Astrocyte of the cerebellum (primary cell): ENCODE measurements at regions of chr3 and their contacts with region 1.

Region 1: GRCh38 chr3:143674100-143674968 is 173.9 kb downstream of the SLC9A9 start:
- DNase-seq: peak; percentile 65
- H3K4me3 ChIP-seq: no peak overlapping the region
- CTCF ChIP-seq: peak; percentile 96

Region 2: GRCh38 chr3:143135150-143135549 is 539.2 kb before region 1 on chr3:
- in situ Hi-C with region 1: loop called (anchors 25 kb)
- DNase-seq: peak; percentile 95
- H3K4me3 ChIP-seq: no peak overlapping the region
- CTCF ChIP-seq: peak; percentile 3

Region 3: DNA sequence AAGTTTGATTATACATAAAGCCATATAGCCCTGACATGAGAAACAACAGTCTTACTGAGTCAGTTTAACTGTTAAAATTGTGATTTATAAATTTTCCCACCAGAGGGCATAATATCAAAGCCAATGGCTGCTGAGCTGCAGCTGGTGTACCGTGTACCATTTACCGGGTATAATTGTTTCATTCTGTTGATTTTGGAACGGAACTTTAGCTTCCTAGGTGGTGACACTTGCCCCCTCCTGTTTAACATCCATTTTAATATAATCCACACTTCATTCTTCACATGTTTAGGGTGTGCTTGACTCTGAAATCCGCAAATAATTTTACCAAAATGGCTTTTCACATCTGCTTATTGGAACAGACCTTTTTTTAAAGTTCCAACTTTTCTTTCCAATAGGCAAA is 101.1 kb after region 1 on chr3:
- in situ Hi-C with region 1: no loop called
- DNase-seq: no peak
- H3K4me3 ChIP-seq: no peak overlapping the region
- CTCF ChIP-seq: peak; percentile 61